Dendritic cell treated with granulocyte-macrophage colony-stimulating factor and Interleukin-4, amounts not matched to agents 40 ng/mL and 50 ng/mL, for 4 days (primary cell): ENCODE measurements at regions of chr10 and their contacts with region 1.

Region 1: GRCh38 chr10:71319042-71319799 is at the start of gene SLC29A3:
- H3K4me3 Mint-ChIP-seq: peak within 1 kb of the TSS; percentile 100
- H3K27ac Mint-ChIP-seq: peak within 1 kb of the TSS; percentile 90
- H3K4me1 Mint-ChIP-seq: peaks cover 77% of the 10 kb centered on the region
- H3K27me3 Mint-ChIP-seq: no peaks in the 10 kb centered on the region

Region 2: GRCh38 chr10:71176661-71177060 is 142.6 kb before region 1 on chr10:
- intact Hi-C with region 1: no loop called
- H3K4me3 Mint-ChIP-seq: no peak overlapping the region
- H3K27ac Mint-ChIP-seq: no peak overlapping the region
- H3K4me1 Mint-ChIP-seq: no peaks in the 10 kb centered on the region
- H3K27me3 Mint-ChIP-seq: peaks cover 1% of the 10 kb centered on the region

Region 3: DNA sequence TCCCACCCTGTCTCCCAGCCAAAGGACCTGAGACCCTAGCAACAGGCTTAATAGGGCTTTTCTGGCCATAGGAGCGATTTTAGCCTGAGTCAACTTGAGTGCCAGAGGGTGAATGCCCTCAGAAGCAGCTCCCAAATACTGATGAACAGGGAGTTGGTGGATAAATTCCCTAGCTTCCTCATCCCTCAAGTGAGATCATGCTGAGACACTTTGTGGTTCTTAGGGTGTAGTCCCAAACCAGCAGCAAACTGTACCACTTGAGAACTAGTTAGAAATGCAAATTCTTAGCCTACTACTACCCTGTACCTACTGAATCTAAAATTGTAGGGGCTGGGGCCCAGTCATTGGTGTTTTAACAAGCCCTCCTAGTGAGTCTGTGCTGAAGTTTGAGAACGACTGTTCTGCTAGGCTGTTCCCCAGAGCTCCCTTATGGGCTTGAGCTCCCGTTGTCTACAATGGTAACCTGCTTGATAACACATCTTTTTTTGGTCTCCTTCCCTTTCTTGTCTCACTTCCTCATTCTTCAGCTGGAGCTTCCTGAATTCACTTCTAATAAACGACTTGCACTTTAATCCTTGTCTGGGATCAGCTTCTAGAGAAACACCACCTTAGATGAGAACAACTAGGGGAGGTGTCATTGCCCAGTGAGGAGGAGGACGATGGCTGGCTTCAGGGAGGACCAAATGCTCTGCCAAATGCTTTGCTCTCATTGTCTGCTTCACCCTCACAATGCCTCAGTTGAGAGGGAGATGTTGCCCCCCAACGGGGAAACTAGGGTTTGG is 59.3 kb after region 1 on chr10:
- intact Hi-C with region 1: loop called (anchors 2 kb)
- H3K4me3 Mint-ChIP-seq: peak overlapping the region; percentile 17
- H3K27ac Mint-ChIP-seq: peak overlapping the region; percentile 91
- H3K4me1 Mint-ChIP-seq: peaks cover 77% of the 10 kb centered on the region
- H3K27me3 Mint-ChIP-seq: no peaks in the 10 kb centered on the region

Region 4: GRCh38 chr10:71554671-71555070 is 235.4 kb after region 1 on chr10:
- intact Hi-C with region 1: loop called (anchors 5 kb)
- H3K4me3 Mint-ChIP-seq: no peak overlapping the region
- H3K27ac Mint-ChIP-seq: peak overlapping the region; percentile 49
- H3K4me1 Mint-ChIP-seq: peaks cover 24% of the 10 kb centered on the region
- H3K27me3 Mint-ChIP-seq: peaks cover 25% of the 10 kb centered on the region

Region 5: GRCh38 chr10:71708301-71708703 is 389.1 kb after region 1 on chr10:
- intact Hi-C with region 1: loop called (anchors 1 kb)
- H3K4me3 Mint-ChIP-seq: no peak overlapping the region
- H3K27ac Mint-ChIP-seq: peak overlapping the region; percentile 67
- H3K4me1 Mint-ChIP-seq: peaks cover 73% of the 10 kb centered on the region
- H3K27me3 Mint-ChIP-seq: no peaks in the 10 kb centered on the region

Region 6: GRCh38 chr10:71893920-71894319 is 574.7 kb after region 1 on chr10:
- intact Hi-C with region 1: loop called (anchors 10 kb)
- H3K4me3 Mint-ChIP-seq: no peak overlapping the region
- H3K27ac Mint-ChIP-seq: peak overlapping the region; percentile 41
- H3K4me1 Mint-ChIP-seq: peaks cover 74% of the 10 kb centered on the region
- H3K27me3 Mint-ChIP-seq: no peaks in the 10 kb centered on the region